ENCODE measurements at regions of chr15 and their contacts with region 1.

Region 1: DNA sequence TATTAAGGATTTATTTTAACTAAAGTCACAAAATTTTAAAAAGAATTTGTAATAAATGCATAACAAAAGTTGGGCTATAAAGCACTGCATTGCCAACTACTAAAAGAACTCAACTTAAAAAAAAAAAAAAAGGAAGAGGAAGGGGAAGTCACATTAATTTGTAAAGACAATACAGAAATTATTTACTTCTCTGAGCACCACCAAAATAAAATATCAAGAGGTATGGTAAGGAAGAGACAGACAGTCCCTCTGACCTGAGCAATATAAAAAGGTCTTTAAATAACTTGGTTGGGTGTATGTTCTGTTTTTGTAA is 83.5 kb downstream of the UACA start:
- DNase-seq: no peak
- H3K4me3 ChIP-seq: no peak overlapping the region
- H3K27ac ChIP-seq: no peak overlapping the region
- H3K4me1 ChIP-seq: no peaks in the 10 kb centered on the region
- H3K27me3 ChIP-seq: no peaks in the 10 kb centered on the region
- CTCF ChIP-seq: peak in 1 of 3 experiments; percentile 7
- POLR2A ChIP-seq: no peak

Region 2: GRCh38 chr15:70810916-70811578 is 131.2 kb after region 1 on chr15:
- intact Hi-C with region 1: loop called (anchors 5 kb)
- DNase-seq: no peak
- H3K4me3 ChIP-seq: no peak overlapping the region
- H3K27ac ChIP-seq: no peak overlapping the region
- H3K4me1 ChIP-seq: peaks cover 16% of the 10 kb centered on the region
- H3K27me3 ChIP-seq: no peaks in the 10 kb centered on the region
- CTCF ChIP-seq: no peak
- POLR2A ChIP-seq: no peak

Measured in vagina (tissue), 2 donors.